ENCODE measurements at regions of chrX and their contacts with region 1.

Region 1: DNA sequence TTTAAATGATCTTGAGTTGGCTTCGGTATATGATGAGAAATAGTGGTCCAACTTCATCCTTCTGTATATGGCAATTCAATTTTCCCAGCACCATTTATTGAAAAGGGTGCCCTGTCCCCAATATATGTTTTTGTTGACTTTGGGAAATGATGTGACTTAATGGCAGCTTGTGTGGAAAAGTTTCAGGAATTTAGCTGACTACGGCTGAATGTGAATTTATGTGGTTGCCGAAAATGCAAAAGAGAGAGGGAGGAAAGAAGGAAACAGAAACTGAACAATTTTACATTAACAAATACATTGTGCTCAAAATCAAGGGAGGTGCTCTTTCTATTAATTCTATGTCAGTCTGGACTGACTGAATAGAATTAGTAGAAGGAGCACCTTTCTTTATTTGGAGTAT is 101.8 kb upstream of the CYSLTR1 start:
- DNase-seq: no peak
- ATAC-seq: no peak
- H3K4me3 ChIP-seq: no peak overlapping the region
- H3K4me3 Mint-ChIP-seq: no peak overlapping the region
- H3K27ac ChIP-seq: no peak overlapping the region
- H3K27ac Mint-ChIP-seq: no peak overlapping the region
- H3K4me1 ChIP-seq: no peaks in the 10 kb centered on the region
- H3K4me1 Mint-ChIP-seq: peaks cover 0 to 3% (median 0%) of the 10 kb centered on the region in 3 donors
- H3K27me3 ChIP-seq: no peaks in the 10 kb centered on the region
- H3K27me3 Mint-ChIP-seq: peaks cover 0 to 8% of the 10 kb centered on the region in 2 donors

Region 2: GRCh38 chrX:78592030-78592429 is 162.9 kb after region 1 on chrX:
- CTCF ChIA-PET with region 1: no interaction called
- POLR2A ChIA-PET with region 1: no interaction called
- DNase-seq: no peak
- ATAC-seq: no peak
- H3K4me3 ChIP-seq: no peak overlapping the region
- H3K4me3 Mint-ChIP-seq: no peak overlapping the region
- H3K27ac ChIP-seq: no peak overlapping the region
- H3K27ac Mint-ChIP-seq: no peak overlapping the region
- H3K4me1 ChIP-seq: no peaks in the 10 kb centered on the region
- H3K4me1 Mint-ChIP-seq: peaks cover 0 to 1% (median 0%) of the 10 kb centered on the region in 3 donors
- H3K27me3 ChIP-seq: no peaks in the 10 kb centered on the region
- H3K27me3 Mint-ChIP-seq: peaks cover 0 to 8% of the 10 kb centered on the region in 2 donors

Region 3: GRCh38 chrX:78934866-78935265 is 505.7 kb after region 1 on chrX:
- CTCF ChIA-PET with region 1: interaction called in 1 of 2 experiments, 15 read pairs
- POLR2A ChIA-PET with region 1: no interaction called
- DNase-seq: no peak
- ATAC-seq: no peak
- H3K4me3 ChIP-seq: no peak overlapping the region
- H3K4me3 Mint-ChIP-seq: no peak overlapping the region
- H3K27ac ChIP-seq: no peak overlapping the region
- H3K27ac Mint-ChIP-seq: no peak overlapping the region
- H3K4me1 ChIP-seq: no peaks in the 10 kb centered on the region
- H3K4me1 Mint-ChIP-seq: peaks cover 0 to 5% (median 0%) of the 10 kb centered on the region in 3 donors
- H3K27me3 ChIP-seq: no peaks in the 10 kb centered on the region
- H3K27me3 Mint-ChIP-seq: peaks cover 0 to 8% of the 10 kb centered on the region in 2 donors

Region 4: DNA sequence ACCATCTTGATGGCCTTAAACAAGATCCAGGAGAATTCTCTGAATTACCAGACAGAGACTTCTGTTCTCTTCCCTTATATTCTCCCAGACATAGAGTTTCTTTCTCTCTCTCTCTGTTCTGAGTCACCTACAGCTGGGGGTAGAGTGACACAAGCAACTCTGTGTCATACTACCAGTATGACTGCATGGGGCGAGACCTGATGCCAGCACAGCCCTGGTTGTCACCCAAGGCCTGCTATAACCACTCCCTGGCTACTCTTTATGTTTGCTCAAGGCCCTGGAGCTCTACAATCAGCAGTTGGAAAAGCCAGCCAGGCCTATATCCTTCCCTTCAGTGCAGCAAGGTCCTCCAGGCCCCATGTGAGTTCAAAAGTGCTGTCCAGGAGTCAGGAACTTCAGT is 1876.8 kb after region 1 on chrX:
- CTCF ChIA-PET with region 1: no interaction called
- POLR2A ChIA-PET with region 1: no interaction called
- DNase-seq: no peak
- ATAC-seq: no peak
- H3K4me3 ChIP-seq: no peak overlapping the region
- H3K4me3 Mint-ChIP-seq: no peak overlapping the region
- H3K27ac ChIP-seq: no peak overlapping the region
- H3K27ac Mint-ChIP-seq: no peak overlapping the region
- H3K4me1 ChIP-seq: no peaks in the 10 kb centered on the region
- H3K4me1 Mint-ChIP-seq: no peaks in the 10 kb centered on the region
- H3K27me3 ChIP-seq: no peaks in the 10 kb centered on the region
- H3K27me3 Mint-ChIP-seq: peaks cover 0 to 4% of the 10 kb centered on the region in 2 donors